ENCODE measurements at regions of chr6 and their contacts with region 1.

Region 1: GRCh38 chr6:108260809-108261569 is at the start of gene SNX3:
- DNase-seq: peak; percentile 92 to 95 (median 94)
- H3K4me3 ChIP-seq: peak within 1 kb of the TSS; percentile 83
- H3K27ac ChIP-seq: peak within 1 kb of the TSS; percentile 95 to 97
- H3K4me1 ChIP-seq: peaks cover 3% of the 10 kb centered on the region
- H3K27me3 ChIP-seq: no peaks in the 10 kb centered on the region
- CTCF ChIP-seq: no peak
- EP300 ChIP-seq: no peak
- POLR2A ChIP-seq: peak; percentile 75
- total RNA-seq, gene SNX3: 140 to 207 (median 166) TPM

Region 2: DNA sequence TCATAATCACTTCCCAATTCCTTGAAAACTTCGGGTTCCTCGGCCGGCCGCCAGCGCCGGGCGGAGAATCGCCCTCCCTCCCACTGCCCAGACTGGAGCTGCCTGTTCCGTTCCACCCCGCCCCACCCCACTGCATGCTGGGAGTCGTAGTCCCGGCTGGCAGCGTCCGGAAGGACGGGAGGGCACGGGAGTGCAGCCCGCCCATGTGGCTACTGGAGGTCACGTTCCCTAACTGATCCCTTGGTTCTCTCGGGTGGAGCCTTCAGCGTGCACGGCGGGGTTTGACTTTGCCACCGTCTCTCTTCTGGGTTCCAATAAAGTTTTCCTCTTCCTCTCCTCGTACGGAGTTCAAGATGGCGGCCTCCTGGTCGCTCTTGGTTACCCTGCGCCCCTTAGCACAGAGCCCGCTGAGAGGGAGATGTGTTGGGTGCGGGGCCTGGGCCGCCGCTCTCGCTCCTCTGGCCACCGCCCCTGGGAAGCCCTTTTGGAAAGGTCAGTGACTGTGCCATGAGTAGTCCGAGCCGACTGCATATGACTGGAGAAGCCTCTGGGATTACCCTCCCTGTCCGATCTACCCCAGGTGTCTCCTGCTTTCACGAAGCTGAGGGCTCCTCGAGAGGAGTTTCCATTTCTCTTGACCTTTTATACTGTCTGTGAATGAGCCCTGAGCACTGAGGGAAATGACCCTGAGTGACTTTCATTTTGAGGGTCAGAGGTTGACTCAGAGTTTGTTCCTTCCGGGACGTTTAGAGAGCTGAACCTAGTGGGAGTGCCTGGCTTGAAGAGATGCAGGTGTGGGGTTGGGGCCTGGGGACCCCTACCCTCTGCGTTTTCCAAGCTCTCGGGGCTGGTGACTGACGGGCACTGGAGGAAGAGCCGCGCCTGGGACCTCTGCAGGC is 34.0 kb after region 1 on chr6 and contains the start of gene AFG1L:
- intact Hi-C with region 1: loop called in 1 of 4 experiments (anchors 2 kb)
- DNase-seq: peak; percentile 88 to 93 (median 91)
- H3K4me3 ChIP-seq: peak within 1 kb of the TSS; percentile 75
- H3K27ac ChIP-seq: peak within 1 kb of the TSS; percentile 39 to 59
- H3K4me1 ChIP-seq: peaks cover 6% of the 10 kb centered on the region
- H3K27me3 ChIP-seq: no peaks in the 10 kb centered on the region
- CTCF ChIP-seq: no peak
- EP300 ChIP-seq: no peak
- POLR2A ChIP-seq: no peak
- total RNA-seq, gene AFG1L: 5.2 to 7.6 (median 5.9) TPM